CD4-positive, alpha-beta T cell (primary cell): ENCODE measurements at regions of chr1 and their contacts with region 1.

Region 1: DNA sequence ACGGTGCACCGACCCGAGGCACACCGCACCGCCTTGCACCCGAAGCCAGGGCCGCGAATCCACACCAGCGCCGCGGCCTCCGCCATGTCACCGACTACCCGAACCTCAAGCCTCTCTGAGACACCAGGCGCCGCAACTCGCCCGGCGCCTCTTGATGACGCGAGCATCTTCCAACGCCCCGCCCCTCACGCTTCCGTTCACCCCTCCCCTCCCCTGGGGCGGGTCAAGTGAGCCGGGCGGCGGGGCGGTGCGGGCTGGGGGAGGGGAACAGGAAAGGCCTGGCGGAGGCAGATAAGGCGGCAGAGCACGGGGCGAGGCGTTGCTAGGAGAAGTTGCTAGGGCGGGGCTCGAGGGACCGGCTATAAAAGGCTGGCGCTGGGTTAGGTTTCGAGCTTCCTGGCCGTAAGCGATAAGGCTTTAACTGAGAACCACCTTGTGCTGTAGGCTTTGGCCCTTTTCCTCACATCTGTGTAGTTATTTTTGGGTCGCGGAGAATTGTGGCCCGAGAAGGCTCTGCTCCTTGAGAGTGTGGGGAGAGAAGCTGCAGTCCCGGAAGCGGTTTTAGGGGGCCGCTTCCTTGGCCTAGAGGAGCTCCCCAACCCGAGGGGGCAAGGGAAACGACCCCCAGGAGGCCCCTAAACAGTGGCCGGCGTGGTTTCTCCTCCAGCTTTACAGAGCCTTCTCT is at the start of gene SDE2:
- DNase-seq: peak; percentile 99 to 100 (median 100)
- ATAC-seq: peak; percentile 75
- H3K4me3 ChIP-seq: peak within 1 kb of the TSS; percentile 88
- H3K4me3 Mint-ChIP-seq: peak within 1 kb of the TSS; percentile 99
- H3K27ac ChIP-seq: peak within 1 kb of the TSS; percentile 99
- H3K27ac Mint-ChIP-seq: peak within 1 kb of the TSS; percentile 96
- H3K4me1 ChIP-seq: peaks cover 68% of the 10 kb centered on the region
- H3K4me1 Mint-ChIP-seq: peaks cover 83% of the 10 kb centered on the region
- H3K27me3 ChIP-seq: no peaks in the 10 kb centered on the region
- H3K27me3 Mint-ChIP-seq: no peaks in the 10 kb centered on the region
- CTCF ChIP-seq: no peak
- total RNA-seq, gene SDE2: 48.2 to 49.3 TPM

Region 2: GRCh38 chr1:225428068-225428880 is 571.1 kb before region 1 on chr1:
- CTCF ChIA-PET with region 1: no interaction called
- POLR2A ChIA-PET with region 1: interaction called, 24 read pairs
- intact Hi-C with region 1: loop called in 1 of 2 experiments (anchors 5 kb)
- DNase-seq: peak; percentile 83 to 96 (median 90)
- ATAC-seq: peak; percentile 89
- H3K4me3 ChIP-seq: peak overlapping the region; percentile 94
- H3K4me3 Mint-ChIP-seq: peak overlapping the region; percentile 90
- H3K27ac ChIP-seq: peak overlapping the region; percentile 84 to 85
- H3K27ac Mint-ChIP-seq: peak overlapping the region; percentile 84
- H3K4me1 ChIP-seq: peaks cover 33% of the 10 kb centered on the region
- H3K4me1 Mint-ChIP-seq: peaks cover 47% of the 10 kb centered on the region
- H3K27me3 ChIP-seq: no peaks in the 10 kb centered on the region
- H3K27me3 Mint-ChIP-seq: no peaks in the 10 kb centered on the region
- CTCF ChIP-seq: no peak

Region 3: GRCh38 chr1:225777583-225778336 is 221.6 kb before region 1 on chr1 and contains the start of gene SRP9:
- CTCF ChIA-PET with region 1: interaction called, 7 read pairs
- POLR2A ChIA-PET with region 1: interaction called, 42 read pairs
- intact Hi-C with region 1: loop called in 1 of 2 experiments (anchors 5 kb)
- DNase-seq: peak; percentile 98 to 100 (median 99)
- ATAC-seq: peak; percentile 90
- H3K4me3 ChIP-seq: peak within 1 kb of the TSS; percentile 68
- H3K4me3 Mint-ChIP-seq: no peak within 1 kb of the TSS
- H3K27ac ChIP-seq: peak within 1 kb of the TSS; percentile 95 to 97
- H3K27ac Mint-ChIP-seq: no peak within 1 kb of the TSS
- H3K4me1 ChIP-seq: peaks cover 42% of the 10 kb centered on the region
- H3K4me1 Mint-ChIP-seq: peaks cover 15% of the 10 kb centered on the region
- H3K27me3 ChIP-seq: no peaks in the 10 kb centered on the region
- H3K27me3 Mint-ChIP-seq: no peaks in the 10 kb centered on the region
- CTCF ChIP-seq: peak; percentile 86
- total RNA-seq, gene SRP9: 63.7 to 69.8 TPM

Region 4: DNA sequence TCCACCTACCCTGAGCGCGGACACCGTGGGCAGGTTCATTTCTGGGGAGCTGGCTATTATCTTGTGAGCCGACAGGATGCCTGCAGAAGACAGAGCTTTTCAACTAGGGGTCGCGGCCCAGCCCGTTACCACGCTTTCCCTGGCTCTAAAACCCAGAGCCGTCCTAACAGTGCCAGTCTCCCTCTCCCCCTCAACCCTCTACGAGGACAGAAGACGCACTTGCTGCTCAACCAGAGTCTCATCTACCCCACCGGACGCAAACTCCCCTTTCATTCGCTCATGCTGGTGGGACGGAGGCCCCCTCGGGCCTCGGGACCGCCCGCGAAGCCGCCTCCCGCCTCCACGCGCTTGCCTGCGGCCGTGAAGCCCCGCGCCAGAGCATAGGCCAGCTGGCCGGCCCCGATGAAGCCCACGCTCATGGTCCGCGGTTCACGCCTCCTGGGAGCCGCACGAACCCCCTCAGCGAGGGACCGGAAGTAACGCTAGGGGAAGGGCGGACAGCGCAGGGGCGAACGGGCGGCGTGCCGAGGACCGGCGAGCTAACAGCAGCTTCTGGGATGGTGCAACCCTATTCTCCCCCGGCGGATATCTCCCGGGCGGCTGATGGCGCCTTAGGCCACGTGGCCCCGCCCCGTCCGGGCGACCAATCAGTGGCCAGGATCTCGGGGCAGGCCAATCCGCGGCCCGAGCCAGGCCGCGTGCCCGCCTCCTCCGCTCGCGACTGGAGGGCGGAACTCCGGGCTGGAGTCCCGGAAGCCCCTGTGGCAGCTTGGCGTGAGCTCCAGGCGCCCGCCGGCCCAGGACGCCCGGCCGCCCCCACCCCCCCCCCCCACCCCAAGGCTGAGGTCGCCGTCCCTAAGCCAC is 75.4 kb before region 1 on chr1 and contains the start of gene PYCR2:
- CTCF ChIA-PET with region 1: no interaction called
- POLR2A ChIA-PET with region 1: interaction called, 8 read pairs
- intact Hi-C with region 1: loop called (anchors 2 to 5 kb)
- DNase-seq: peak; percentile 87 to 98 (median 93)
- ATAC-seq: peak; percentile 98
- H3K4me3 ChIP-seq: peak within 1 kb of the TSS; percentile 95
- H3K4me3 Mint-ChIP-seq: peak within 1 kb of the TSS; percentile 95
- H3K27ac ChIP-seq: peak within 1 kb of the TSS; percentile 79 to 89
- H3K27ac Mint-ChIP-seq: peak within 1 kb of the TSS; percentile 98
- H3K4me1 ChIP-seq: peaks cover 74% of the 10 kb centered on the region
- H3K4me1 Mint-ChIP-seq: peaks cover 54% of the 10 kb centered on the region
- H3K27me3 ChIP-seq: no peaks in the 10 kb centered on the region
- H3K27me3 Mint-ChIP-seq: no peaks in the 10 kb centered on the region
- CTCF ChIP-seq: no peak
- total RNA-seq, gene PYCR2: 24.1 to 26.2 TPM

Region 5: DNA sequence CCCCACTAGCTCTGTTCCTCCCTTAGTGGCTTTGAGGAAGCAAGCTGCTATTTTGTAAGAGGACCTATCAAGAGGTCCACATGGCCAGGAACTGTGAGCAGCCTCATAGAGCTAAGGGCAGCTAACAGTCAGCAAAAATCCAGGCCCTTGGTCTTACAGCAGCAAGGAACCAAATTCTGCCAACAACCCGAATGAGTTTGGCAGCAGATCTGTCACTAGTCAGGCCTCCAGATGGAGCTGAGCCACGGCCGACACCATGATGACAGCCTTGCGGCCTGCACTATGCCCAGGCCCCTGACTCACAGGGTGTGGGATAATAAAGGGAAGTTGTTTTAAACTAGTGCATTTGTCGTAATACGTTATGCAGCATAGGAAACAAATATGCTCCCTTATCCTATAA is 35.1 kb after region 1 on chr1:
- CTCF ChIA-PET with region 1: no interaction called
- POLR2A ChIA-PET with region 1: interaction called, 12 read pairs
- intact Hi-C with region 1: no loop called
- DNase-seq: peak in 3 of 14 experiments; percentile 20 to 79 (median 67)
- ATAC-seq: no peak
- H3K4me3 ChIP-seq: no peak overlapping the region
- H3K4me3 Mint-ChIP-seq: no peak overlapping the region
- H3K27ac ChIP-seq: no peak overlapping the region
- H3K27ac Mint-ChIP-seq: no peak overlapping the region
- H3K4me1 ChIP-seq: no peaks in the 10 kb centered on the region
- H3K4me1 Mint-ChIP-seq: no peaks in the 10 kb centered on the region
- H3K27me3 ChIP-seq: no peaks in the 10 kb centered on the region
- H3K27me3 Mint-ChIP-seq: no peaks in the 10 kb centered on the region
- CTCF ChIP-seq: no peak

Region 6: DNA sequence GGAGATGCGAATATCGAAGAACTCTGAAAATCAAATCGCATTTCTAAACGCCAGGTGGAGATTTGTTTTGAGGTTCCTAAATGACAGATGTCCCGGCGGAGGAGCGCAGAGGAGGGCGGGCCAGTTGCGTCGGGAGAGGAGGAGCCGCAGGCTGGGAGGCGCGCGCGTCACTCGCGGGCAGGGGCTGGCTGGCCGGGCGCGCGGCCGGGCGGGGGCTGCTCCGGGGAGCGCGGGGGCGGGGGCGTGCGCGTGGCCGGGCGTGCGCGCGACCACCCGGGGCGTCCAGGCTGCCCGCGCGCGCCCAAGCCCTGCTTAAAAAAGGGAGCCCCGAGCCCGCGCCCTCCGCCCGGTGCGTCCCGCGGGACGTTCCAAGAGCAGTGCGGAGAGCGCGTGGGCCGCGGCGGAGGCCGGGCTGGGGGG is 110.5 kb after region 1 on chr1:
- CTCF ChIA-PET with region 1: no interaction called
- POLR2A ChIA-PET with region 1: interaction called, 12 read pairs
- intact Hi-C with region 1: no loop called
- DNase-seq: peak; percentile 50 to 90 (median 64)
- ATAC-seq: peak; percentile 85
- H3K4me3 ChIP-seq: peak overlapping the region; percentile 58
- H3K4me3 Mint-ChIP-seq: peak overlapping the region; percentile 92
- H3K27ac ChIP-seq: peak overlapping the region; percentile 29 to 53
- H3K27ac Mint-ChIP-seq: peak overlapping the region; percentile 70
- H3K4me1 ChIP-seq: peaks cover 18% of the 10 kb centered on the region
- H3K4me1 Mint-ChIP-seq: peaks cover 9% of the 10 kb centered on the region
- H3K27me3 ChIP-seq: no peaks in the 10 kb centered on the region
- H3K27me3 Mint-ChIP-seq: no peaks in the 10 kb centered on the region
- CTCF ChIP-seq: no peak

Region 7: GRCh38 chr1:226308723-226309315 is 309.4 kb after region 1 on chr1 and contains the start of gene LIN9:
- CTCF ChIA-PET with region 1: no interaction called
- POLR2A ChIA-PET with region 1: interaction called, 6 read pairs
- intact Hi-C with region 1: loop called in 1 of 2 experiments (anchors 10 kb)
- DNase-seq: peak; percentile 83 to 94 (median 89)
- ATAC-seq: peak; percentile 91
- H3K4me3 ChIP-seq: peak within 1 kb of the TSS; percentile 98
- H3K4me3 Mint-ChIP-seq: peak within 1 kb of the TSS; percentile 95
- H3K27ac ChIP-seq: peak within 1 kb of the TSS in 1 of 2 donors; percentile 30
- H3K27ac Mint-ChIP-seq: peak within 1 kb of the TSS; percentile 67
- H3K4me1 ChIP-seq: peaks cover 12% of the 10 kb centered on the region
- H3K4me1 Mint-ChIP-seq: peaks cover 26% of the 10 kb centered on the region
- H3K27me3 ChIP-seq: peaks cover 0 to 8% of the 10 kb centered on the region in 2 experiments
- H3K27me3 Mint-ChIP-seq: peaks cover 25% of the 10 kb centered on the region
- CTCF ChIP-seq: no peak
- total RNA-seq, gene LIN9: 1.3 to 1.5 TPM